ENCODE measurements at regions of chr5 and their contacts with region 1.

Region 1: DNA sequence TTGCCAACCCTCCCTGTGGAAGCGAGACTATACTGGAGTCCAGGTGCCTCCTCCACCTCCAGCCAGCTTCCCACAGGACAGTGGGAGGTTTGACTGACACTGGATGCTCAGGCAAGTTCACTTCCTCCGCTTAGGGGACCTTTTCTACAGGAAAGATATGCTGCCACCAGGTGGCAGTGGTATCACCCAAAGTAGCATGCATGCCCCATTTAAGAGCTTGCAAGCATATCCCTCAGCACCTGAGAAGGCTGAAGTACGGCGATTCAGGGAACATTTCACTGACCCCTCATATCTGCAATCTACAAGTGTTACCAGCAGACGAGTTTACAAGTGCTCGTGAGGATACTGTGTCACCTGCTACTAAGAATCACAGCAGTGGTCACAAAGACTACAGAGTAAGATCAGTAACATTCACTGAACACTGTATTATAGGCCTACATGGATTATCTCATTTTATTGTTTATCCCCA is 75.5 kb downstream of the KLHL3 start:
- DNase-seq: peak; percentile 32 to 78 (median 70)
- ATAC-seq: peak; percentile 91
- H3K4me3 ChIP-seq: no peak overlapping the region
- H3K4me3 Mint-ChIP-seq: no peak overlapping the region
- H3K27ac ChIP-seq: no peak overlapping the region
- H3K27ac Mint-ChIP-seq: peak overlapping the region in 4 of 9 donors; percentile 27 to 45 (median 36)
- H3K4me1 ChIP-seq: peaks cover 0 to 4% of the 10 kb centered on the region in 2 donors
- H3K4me1 Mint-ChIP-seq: peaks cover 0 to 17% (median 14%) of the 10 kb centered on the region in 7 donors
- H3K27me3 ChIP-seq: no peaks in the 10 kb centered on the region
- H3K27me3 Mint-ChIP-seq: no peaks in the 10 kb centered on the region

Region 2: DNA sequence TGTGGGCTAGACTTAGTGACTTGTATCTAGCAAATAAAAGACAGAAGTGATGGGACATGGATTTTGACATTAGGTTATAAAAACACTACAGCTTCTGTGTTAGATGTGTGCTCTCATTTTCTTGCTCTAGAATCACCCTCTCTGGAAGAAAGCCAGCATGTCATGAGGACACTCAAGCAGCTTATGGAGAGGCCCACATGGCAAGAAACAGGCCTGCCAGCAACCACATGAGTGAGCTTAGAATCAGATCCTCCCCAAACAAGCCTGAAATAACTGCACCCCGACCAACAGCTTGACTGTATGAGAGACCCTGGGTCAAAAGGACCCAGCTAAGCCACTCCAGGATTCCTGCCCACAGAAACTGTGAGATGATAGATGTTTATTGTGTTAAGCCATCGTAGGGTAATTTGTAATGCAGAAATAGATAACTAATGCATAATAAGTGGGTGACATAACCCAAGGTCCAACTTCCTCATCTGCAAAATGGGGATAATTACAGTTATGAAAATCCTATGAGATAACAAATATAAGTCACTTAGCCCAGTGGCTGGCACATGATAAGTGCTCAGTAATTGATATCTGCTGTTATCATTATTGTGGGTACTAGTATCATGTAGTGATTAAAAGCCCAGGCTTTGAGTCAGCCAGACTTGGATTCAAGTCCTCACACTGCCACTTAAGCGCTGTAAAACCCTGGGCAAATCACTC is 11.0 kb before region 1 on chr5:
- CTCF ChIA-PET with region 1: interaction called, 10 read pairs
- POLR2A ChIA-PET with region 1: no interaction called
- intact Hi-C with region 1: no loop called
- DNase-seq: no peak
- ATAC-seq: no peak
- H3K4me3 ChIP-seq: no peak overlapping the region
- H3K4me3 Mint-ChIP-seq: no peak overlapping the region
- H3K27ac ChIP-seq: no peak overlapping the region
- H3K27ac Mint-ChIP-seq: peak overlapping the region in 1 of 9 donors; percentile 43
- H3K4me1 ChIP-seq: no peaks in the 10 kb centered on the region
- H3K4me1 Mint-ChIP-seq: peaks cover 0 to 3% (median 0%) of the 10 kb centered on the region in 7 donors
- H3K27me3 ChIP-seq: no peaks in the 10 kb centered on the region
- H3K27me3 Mint-ChIP-seq: no peaks in the 10 kb centered on the region

Region 3: DNA sequence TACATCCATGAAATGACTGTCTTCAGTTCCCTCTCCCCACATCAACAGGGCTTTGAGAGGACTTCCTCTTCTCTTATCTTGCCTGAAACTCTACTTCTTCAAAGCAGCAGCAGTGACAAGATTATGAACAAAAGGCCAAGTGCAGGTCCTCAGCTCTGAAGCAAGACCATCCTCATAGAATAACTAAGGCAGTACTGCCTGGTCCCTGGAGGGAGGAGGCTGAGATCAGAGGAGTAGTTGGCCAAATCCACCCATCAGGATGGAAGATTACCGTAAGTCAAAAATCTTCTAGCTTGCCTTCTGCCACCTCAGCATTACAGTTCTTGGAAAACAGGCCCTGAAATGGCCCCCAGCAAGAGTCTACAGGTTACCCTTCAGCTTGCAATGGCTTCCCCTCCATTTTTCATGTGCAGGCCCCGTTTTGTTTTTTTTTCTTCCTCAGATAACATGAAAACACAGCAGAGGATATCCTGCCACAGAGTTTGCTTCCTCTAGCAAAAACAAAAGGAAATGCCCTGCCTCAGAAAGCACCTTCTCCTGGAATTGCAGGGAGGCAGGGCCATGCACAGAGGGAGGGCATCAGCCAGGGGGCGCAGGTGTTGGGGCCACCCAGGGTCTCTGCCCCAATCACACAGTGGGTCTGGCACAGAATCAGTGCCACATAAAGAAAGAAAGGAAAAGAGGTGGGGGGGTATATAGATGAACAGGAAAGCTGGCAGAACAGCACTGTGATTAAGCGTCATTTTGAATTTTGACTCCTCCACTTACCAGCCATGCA is 35.5 kb after region 1 on chr5:
- CTCF ChIA-PET with region 1: interaction called, 73 read pairs
- POLR2A ChIA-PET with region 1: interaction called, 10 read pairs
- intact Hi-C with region 1: loop called (anchors 1 to 2 kb)
- DNase-seq: peak in 8 of 9 donors; percentile 7 to 77 (median 68)
- ATAC-seq: peak; percentile 82
- H3K4me3 ChIP-seq: peak overlapping the region; percentile 38
- H3K4me3 Mint-ChIP-seq: peak overlapping the region; percentile 62 to 85 (median 78)
- H3K27ac ChIP-seq: peak overlapping the region; percentile 58
- H3K27ac Mint-ChIP-seq: peak overlapping the region; percentile 90 to 98 (median 96)
- H3K4me1 ChIP-seq: peaks cover 22 to 47% of the 10 kb centered on the region in 2 donors
- H3K4me1 Mint-ChIP-seq: peaks cover 31 to 78% (median 76%) of the 10 kb centered on the region in 7 donors
- H3K27me3 ChIP-seq: no peaks in the 10 kb centered on the region
- H3K27me3 Mint-ChIP-seq: no peaks in the 10 kb centered on the region

Region 4: DNA sequence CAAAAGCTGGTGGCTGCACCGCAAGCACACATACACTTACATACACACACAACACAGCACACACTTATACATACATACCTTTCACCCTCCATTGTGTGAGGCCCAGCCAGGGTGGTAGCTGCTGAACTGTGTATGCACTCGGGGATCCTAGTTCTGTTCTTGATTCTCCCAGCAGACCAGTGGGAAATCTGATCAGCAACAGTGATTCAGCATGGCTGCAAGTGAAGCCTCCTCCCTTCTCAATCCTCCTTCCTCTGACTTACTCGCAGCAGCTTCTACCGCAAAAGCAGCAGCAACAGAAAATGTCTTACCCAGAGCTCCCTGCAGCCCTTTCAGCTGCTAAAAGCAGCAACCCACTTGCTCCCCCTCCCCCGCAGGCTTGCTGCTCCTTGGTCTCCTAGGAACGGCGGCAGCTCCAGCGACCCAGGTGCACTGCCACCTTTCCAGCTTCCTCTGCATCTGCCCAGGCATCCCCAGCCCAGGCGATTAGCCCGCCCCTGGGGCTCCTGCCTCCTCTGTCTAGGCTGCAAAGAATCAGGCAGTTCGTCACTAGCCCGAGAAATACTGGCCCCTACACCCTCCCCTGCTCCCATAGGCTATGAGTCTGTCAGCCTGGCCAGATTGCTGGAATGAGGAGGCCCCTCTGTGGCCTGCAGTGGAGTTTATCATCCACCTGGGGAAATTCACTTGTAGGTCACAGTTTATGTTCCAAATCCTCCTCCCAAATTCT is 75.3 kb after region 1 on chr5 and contains the start of gene KLHL3:
- CTCF ChIA-PET with region 1: interaction called, 328 read pairs
- POLR2A ChIA-PET with region 1: interaction called, 56 read pairs
- intact Hi-C with region 1: no loop called
- DNase-seq: peak in 8 of 9 donors; percentile 32 to 57 (median 44)
- ATAC-seq: peak; percentile 49
- H3K4me3 ChIP-seq: peak within 1 kb of the TSS; percentile 86
- H3K4me3 Mint-ChIP-seq: no peak within 1 kb of the TSS
- H3K27ac ChIP-seq: peak within 1 kb of the TSS; percentile 63
- H3K27ac Mint-ChIP-seq: no peak within 1 kb of the TSS
- H3K4me1 ChIP-seq: peaks cover 9 to 58% of the 10 kb centered on the region in 2 donors
- H3K4me1 Mint-ChIP-seq: peaks cover 0 to 42% (median 15%) of the 10 kb centered on the region in 7 donors
- H3K27me3 ChIP-seq: no peaks in the 10 kb centered on the region
- H3K27me3 Mint-ChIP-seq: no peaks in the 10 kb centered on the region
- total RNA-seq, gene KLHL3: 10.4 to 47.3 (median 26.6) TPM

Region 5: DNA sequence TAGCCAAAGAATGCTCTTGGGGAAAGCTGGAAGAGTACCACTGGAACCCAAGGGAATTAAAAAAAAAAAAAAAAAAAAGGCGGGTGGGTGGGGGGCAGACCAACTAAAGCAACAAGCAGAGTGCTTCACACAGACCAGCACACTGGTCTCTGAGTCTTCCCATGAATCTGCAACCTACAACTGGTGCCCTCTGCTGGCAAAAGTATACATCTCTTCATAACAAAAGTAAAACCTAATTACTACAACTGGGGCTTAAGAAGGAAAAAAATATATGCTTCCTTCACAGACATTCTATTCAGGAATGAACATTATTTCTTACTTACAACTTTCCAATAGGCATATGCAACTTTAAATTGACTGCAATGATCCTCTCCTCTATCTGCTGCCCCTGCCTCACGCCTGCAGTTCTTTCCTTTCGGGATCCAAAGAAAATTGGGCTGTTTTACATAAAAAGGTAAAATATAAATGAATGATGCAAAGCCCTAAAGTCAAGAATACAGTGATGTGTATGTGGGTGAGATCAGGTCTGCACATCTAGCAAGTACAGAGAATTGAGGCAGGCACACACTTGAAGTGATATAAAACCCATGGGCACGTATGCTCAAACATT is 82.8 kb after region 1 on chr5:
- CTCF ChIA-PET with region 1: interaction called, 328 read pairs
- POLR2A ChIA-PET with region 1: interaction called, 56 read pairs
- intact Hi-C with region 1: loop called (anchors 1 kb)
- DNase-seq: peak in 8 of 9 donors; percentile 34 to 77 (median 72)
- ATAC-seq: peak; percentile 93
- H3K4me3 ChIP-seq: no peak overlapping the region
- H3K4me3 Mint-ChIP-seq: peak overlapping the region in 1 of 10 donors; percentile 54
- H3K27ac ChIP-seq: no peak overlapping the region
- H3K27ac Mint-ChIP-seq: peak overlapping the region in 2 of 9 donors; percentile 64 to 70
- H3K4me1 ChIP-seq: peaks cover 1 to 12% of the 10 kb centered on the region in 2 donors
- H3K4me1 Mint-ChIP-seq: peaks cover 5 to 32% (median 12%) of the 10 kb centered on the region in 7 donors
- H3K27me3 ChIP-seq: no peaks in the 10 kb centered on the region
- H3K27me3 Mint-ChIP-seq: peaks cover 0 to 3% (median 0%) of the 10 kb centered on the region in 5 donors

Region 6: GRCh38 chr5:138128334-138128733 is 468.0 kb after region 1 on chr5:
- CTCF ChIA-PET with region 1: interaction called, 3 read pairs
- POLR2A ChIA-PET with region 1: no interaction called
- intact Hi-C with region 1: loop called (anchors 1 kb)
- DNase-seq: no peak
- ATAC-seq: no peak
- H3K4me3 ChIP-seq: no peak overlapping the region
- H3K4me3 Mint-ChIP-seq: no peak overlapping the region
- H3K27ac ChIP-seq: no peak overlapping the region
- H3K27ac Mint-ChIP-seq: no peak overlapping the region
- H3K4me1 ChIP-seq: no peaks in the 10 kb centered on the region
- H3K4me1 Mint-ChIP-seq: peaks cover 0 to 2% (median 0%) of the 10 kb centered on the region in 7 donors
- H3K27me3 ChIP-seq: no peaks in the 10 kb centered on the region
- H3K27me3 Mint-ChIP-seq: peaks cover 0 to 22% (median 4%) of the 10 kb centered on the region in 5 donors